GM12878 (cell line): ENCODE measurements at regions of chr2 and their contacts with region 1.

Region 1: DNA sequence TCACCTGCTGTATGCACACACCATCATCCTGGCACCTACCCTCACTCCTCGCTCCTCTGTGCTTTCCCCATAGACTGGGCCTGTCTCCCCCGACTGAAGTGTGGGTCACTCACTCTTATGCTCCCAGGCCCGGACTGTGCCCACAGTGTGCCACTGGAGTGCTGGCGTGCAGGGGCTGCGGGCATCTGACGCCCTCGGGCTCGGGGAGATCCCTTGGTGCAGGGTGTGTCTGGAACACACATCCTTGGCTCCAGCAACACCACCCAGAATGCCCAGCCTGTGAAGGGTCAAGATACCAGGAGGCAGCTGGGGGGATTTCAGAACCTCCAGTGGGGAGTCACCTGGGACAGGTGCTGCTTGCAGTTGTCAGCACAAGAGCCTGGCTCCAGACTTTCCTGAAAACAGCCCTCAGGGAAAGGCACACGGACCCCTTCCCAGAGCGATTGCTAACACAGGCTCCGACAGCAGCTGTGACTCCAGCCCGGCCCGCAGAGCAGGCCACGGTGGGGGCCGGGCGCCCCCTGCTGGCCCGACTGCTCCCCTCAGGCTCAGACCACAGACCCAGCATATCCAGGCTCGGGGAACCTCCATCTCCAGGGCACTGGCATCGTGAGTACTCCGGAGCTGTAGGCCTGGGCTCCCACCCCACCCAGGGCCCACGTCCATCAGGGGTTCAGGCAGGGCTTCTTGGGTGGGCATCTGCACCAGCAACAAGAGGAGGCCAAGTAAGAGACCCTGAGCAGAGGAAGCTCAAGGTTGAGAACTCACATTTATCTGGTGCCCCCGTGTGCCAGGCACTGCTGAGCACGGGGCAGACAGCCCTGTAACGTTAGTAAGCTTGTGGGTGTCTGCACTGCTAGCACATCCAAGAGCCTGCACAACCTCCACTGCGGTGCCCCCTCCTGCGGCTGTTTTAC is 8.6 kb downstream of the HS1BP3 start:
- DNase-seq: no peak
- ATAC-seq: peak; percentile 100
- H3K4me3 ChIP-seq: no peak overlapping the region
- H3K27ac ChIP-seq: no peak overlapping the region
- H3K4me1 ChIP-seq: no peaks in the 10 kb centered on the region
- H3K27me3 ChIP-seq: no peaks in the 10 kb centered on the region
- CTCF ChIP-seq: peak; percentile 87 to 96 (median 91)
- EP300 ChIP-seq: no peak
- POLR2A ChIP-seq: no peak
- RAD21 ChIP-seq: peak; percentile 98

Region 2: DNA sequence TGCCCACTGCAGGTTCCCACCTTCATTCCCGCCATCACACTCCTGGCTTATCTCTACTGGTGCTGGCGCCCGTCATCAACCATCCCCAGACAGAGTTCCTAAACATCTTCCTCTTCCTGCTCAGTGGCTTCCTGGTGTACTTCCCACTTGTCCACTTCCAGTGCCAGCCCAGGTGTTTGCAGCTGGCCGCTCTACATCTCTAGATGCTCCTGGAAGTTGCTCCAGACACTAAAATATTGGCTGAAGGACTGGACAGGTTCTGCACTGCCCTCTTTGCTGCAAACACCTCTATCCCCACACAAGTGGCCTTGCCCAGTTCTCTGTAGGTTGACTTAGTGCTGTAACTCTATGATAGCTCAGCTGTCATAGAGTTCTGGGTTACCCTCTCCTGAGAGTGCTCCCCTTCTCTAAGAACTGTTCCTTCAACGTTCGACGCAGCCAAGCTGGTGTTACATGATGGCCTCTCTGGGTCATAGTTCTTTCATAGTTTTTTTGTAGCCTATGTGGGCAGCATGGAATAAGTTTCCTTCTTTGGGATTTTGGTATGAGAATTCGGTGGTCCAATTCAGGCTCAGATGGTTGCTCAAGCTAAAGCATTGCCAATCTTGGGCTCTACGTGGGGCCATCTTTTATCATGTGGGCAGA is 245.8 kb before region 1 on chr2:
- CTCF ChIA-PET with region 1: no interaction called
- POLR2A ChIA-PET with region 1: no interaction called
- RAD21 ChIA-PET with region 1: no interaction called
- SMC1A ChIA-PET with region 1: no interaction called
- in situ Hi-C with region 1: no loop called
- intact Hi-C with region 1: loop called (anchors 1 kb)
- DNase-seq: no peak
- ATAC-seq: no peak
- H3K4me3 ChIP-seq: no peak overlapping the region
- H3K27ac ChIP-seq: no peak overlapping the region
- H3K4me1 ChIP-seq: no peaks in the 10 kb centered on the region
- H3K27me3 ChIP-seq: peaks cover 0 to 1% of the 10 kb centered on the region in 2 experiments; a peak in 2 of 4 replicates
- CTCF ChIP-seq: no peak
- EP300 ChIP-seq: no peak
- POLR2A ChIP-seq: no peak
- RAD21 ChIP-seq: no peak

Region 3: DNA sequence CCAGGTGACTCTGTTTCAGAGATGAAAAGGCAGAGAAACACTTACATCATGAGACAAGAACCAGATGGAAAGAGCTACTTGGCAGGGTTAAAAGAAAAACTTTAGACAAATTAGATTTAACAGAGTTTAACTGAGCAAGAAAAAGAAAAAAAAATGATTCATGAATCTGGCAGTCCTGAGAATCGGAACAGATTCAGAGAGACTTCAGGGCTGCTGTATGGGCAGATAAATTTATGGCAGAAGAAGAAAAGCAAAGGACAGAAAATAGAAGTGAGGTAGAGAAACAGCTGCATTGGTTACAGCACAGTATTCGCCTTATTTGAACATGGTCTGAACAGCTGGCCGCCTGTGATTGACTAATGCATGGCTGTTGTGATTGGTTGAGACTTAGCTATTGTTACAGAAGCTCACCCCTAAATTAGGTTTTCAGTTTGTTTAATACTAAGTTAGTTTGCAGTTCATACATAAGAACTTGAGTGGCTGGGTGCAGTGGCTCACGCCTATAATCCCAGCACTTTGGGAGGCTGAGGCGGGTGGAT is 238.5 kb before region 1 on chr2:
- CTCF ChIA-PET with region 1: interaction called, 16 read pairs
- POLR2A ChIA-PET with region 1: no interaction called
- RAD21 ChIA-PET with region 1: no interaction called
- SMC1A ChIA-PET with region 1: no interaction called
- in situ Hi-C with region 1: no loop called
- intact Hi-C with region 1: no loop called
- DNase-seq: no peak
- ATAC-seq: no peak
- H3K4me3 ChIP-seq: no peak overlapping the region
- H3K27ac ChIP-seq: no peak overlapping the region
- H3K4me1 ChIP-seq: no peaks in the 10 kb centered on the region
- H3K27me3 ChIP-seq: no peaks in the 10 kb centered on the region
- CTCF ChIP-seq: no peak
- EP300 ChIP-seq: no peak
- POLR2A ChIP-seq: no peak
- RAD21 ChIP-seq: no peak

Region 4: DNA sequence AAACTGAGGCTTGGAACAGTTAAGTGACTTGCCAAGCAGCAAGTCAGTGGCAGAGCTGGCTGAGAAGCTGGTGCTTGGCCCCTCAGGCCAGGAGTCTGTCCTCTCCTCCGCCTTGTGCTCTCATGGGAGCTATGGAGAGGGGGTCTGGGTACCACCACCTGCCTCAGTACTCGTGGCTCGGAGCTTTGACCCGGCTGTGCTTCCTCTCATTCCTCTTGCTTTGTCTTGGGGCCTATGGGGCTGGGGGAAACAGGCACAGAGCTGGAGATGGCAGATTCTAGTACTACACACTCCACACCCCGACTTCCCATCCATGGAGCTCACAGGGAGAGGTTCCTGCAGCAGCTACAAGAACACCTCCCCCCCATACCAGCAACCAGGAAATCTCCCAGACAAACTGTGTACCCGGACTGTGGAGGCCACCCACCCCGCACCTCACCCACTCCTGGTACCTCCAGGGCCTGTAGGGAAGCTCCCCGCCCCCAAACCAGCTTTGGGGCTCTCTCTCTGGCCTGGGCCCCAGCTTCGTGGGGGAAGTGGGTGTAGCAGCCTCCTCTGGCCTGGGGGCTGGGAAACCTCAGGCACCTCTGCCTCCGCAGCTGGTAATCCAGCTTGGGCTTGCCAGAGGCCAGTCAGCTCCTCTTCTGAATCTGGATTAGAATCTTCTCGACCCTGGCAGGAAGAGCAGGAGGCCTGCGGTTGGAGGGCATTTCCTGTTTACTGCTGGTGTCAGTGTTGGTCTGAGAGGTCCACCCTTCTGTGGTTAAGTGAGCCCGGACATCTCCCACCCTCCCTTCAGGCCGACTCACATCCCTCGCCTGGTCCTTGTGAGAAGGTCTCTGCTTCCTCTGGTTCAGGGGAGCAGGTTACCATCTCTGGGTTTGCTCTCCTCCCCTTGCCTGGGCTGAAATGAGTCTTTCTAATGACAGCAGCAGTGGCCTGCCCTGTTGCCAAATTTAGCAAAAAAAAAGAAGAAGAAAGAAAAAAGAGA is 217.7 kb before region 1 on chr2:
- CTCF ChIA-PET with region 1: interaction called, 14 read pairs
- POLR2A ChIA-PET with region 1: no interaction called
- RAD21 ChIA-PET with region 1: no interaction called
- SMC1A ChIA-PET with region 1: interaction called, 3 read pairs
- in situ Hi-C with region 1: no loop called
- intact Hi-C with region 1: no loop called
- DNase-seq: peak; percentile 57
- ATAC-seq: peak; percentile 76
- H3K4me3 ChIP-seq: peak overlapping the region; percentile 17; the same call in 1 of the 2 replicates
- H3K27ac ChIP-seq: peak overlapping the region; percentile 68
- H3K4me1 ChIP-seq: peaks cover 34% of the 10 kb centered on the region
- H3K27me3 ChIP-seq: no peaks in the 10 kb centered on the region
- CTCF ChIP-seq: no peak
- EP300 ChIP-seq: no peak
- POLR2A ChIP-seq: 0 out of 2 replicates have a peak, but pooled peaks have one; percentile 32
- RAD21 ChIP-seq: no peak

Region 5: GRCh38 chr2:20438334-20439192 is 203.8 kb before region 1 on chr2:
- CTCF ChIA-PET with region 1: interaction called, 119 read pairs
- POLR2A ChIA-PET with region 1: interaction called, 3 read pairs
- RAD21 ChIA-PET with region 1: interaction called, 33 read pairs
- SMC1A ChIA-PET with region 1: interaction called, 56 read pairs
- in situ Hi-C with region 1: loop called (anchors 5 kb)
- intact Hi-C with region 1: loop called (anchors 1 kb)
- DNase-seq: no peak
- ATAC-seq: no peak
- H3K4me3 ChIP-seq: no peak overlapping the region
- H3K27ac ChIP-seq: no peak overlapping the region
- H3K4me1 ChIP-seq: no peaks in the 10 kb centered on the region
- H3K27me3 ChIP-seq: peaks cover 2 to 3% of the 10 kb centered on the region in 2 experiments; a peak in 2 of 4 replicates
- CTCF ChIP-seq: no peak
- EP300 ChIP-seq: no peak
- POLR2A ChIP-seq: no peak
- RAD21 ChIP-seq: no peak

Region 6: DNA sequence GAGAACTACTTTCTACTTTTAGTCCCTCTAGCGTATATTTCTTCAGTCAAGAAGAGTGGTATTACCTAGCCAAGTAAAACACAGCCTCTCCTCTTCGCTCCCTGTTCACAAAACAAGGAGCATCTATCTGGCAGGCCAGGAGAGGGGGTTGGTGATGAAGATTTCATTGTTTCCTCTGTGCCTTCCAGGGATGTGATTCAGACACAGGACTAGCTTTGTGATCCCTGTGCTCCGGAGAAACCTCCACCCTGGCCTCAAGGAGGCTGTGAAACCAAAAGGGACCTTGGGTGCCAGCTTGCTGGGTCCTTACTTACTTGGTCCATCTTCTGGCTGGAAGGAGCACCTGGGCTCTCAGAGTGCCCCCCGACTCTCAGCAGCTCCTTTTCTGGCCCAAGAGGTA is 189.8 kb before region 1 on chr2:
- CTCF ChIA-PET with region 1: interaction called, 119 read pairs
- POLR2A ChIA-PET with region 1: no interaction called
- RAD21 ChIA-PET with region 1: interaction called, 21 read pairs
- SMC1A ChIA-PET with region 1: interaction called, 3 read pairs
- in situ Hi-C with region 1: no loop called
- intact Hi-C with region 1: no loop called
- DNase-seq: no peak
- ATAC-seq: no peak
- H3K4me3 ChIP-seq: no peak overlapping the region
- H3K27ac ChIP-seq: no peak overlapping the region
- H3K4me1 ChIP-seq: peaks cover 3% of the 10 kb centered on the region
- H3K27me3 ChIP-seq: peaks cover 4 to 6% of the 10 kb centered on the region in 2 experiments; a peak in 3 of 4 replicates
- CTCF ChIP-seq: no peak
- EP300 ChIP-seq: no peak
- POLR2A ChIP-seq: no peak
- RAD21 ChIP-seq: no peak

Region 7: GRCh38 chr2:20614201-20615038 is 27.9 kb before region 1 on chr2:
- CTCF ChIA-PET with region 1: interaction called, 11 read pairs
- POLR2A ChIA-PET with region 1: no interaction called
- RAD21 ChIA-PET with region 1: no interaction called
- SMC1A ChIA-PET with region 1: no interaction called
- in situ Hi-C with region 1: no loop called
- intact Hi-C with region 1: no loop called
- DNase-seq: no peak
- ATAC-seq: peak; percentile 51; the same call in 2 of the 3 replicates
- H3K4me3 ChIP-seq: no peak overlapping the region
- H3K27ac ChIP-seq: no peak overlapping the region
- H3K4me1 ChIP-seq: no peaks in the 10 kb centered on the region
- H3K27me3 ChIP-seq: no peaks in the 10 kb centered on the region
- CTCF ChIP-seq: no peak
- EP300 ChIP-seq: no peak
- POLR2A ChIP-seq: no peak
- RAD21 ChIP-seq: no peak